ENCODE measurements at regions of chrX and their contacts with region 1.

Region 1: DNA sequence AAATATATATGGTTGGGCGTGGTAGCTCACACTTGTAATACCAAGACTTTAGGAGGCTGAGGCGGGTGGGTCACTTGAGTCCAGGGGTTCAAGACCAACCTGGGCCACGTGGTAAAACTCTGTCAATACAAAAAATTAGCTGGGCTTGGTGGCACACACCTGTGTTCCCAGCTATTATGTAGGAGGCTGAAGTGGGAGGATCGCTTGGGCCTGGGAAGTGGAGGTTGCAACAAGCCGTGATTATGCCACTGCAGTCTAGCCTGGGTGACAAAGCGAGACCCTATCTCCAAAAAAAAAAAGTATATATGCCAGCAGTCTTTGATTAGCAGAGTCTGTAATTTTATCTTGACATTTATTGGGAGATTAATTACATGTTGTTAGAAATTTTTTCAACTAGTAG is 8.7 kb downstream of the EIF2S3 start:
- DNase-seq: no peak
- ATAC-seq: no peak
- H3K4me3 ChIP-seq: no peak overlapping the region
- H3K27ac ChIP-seq: no peak overlapping the region
- H3K4me1 ChIP-seq: no peaks in the 10 kb centered on the region
- H3K27me3 ChIP-seq: no peaks in the 10 kb centered on the region
- CTCF ChIP-seq: no peak

Region 2: GRCh38 chrX:23720117-23720677 is 343.3 kb before region 1 on chrX:
- intact Hi-C with region 1: loop called in 1 of 2 experiments (anchors 10 kb)
- DNase-seq: no peak
- ATAC-seq: peak in 1 of 4 donors; percentile 48
- H3K4me3 ChIP-seq: no peak overlapping the region
- H3K27ac ChIP-seq: no peak overlapping the region
- H3K4me1 ChIP-seq: no peaks in the 10 kb centered on the region
- H3K27me3 ChIP-seq: no peaks in the 10 kb centered on the region
- CTCF ChIP-seq: no peak